Right ventricle myocardium inferior (tissue), 1 donor: ENCODE measurements at regions of chr20 and their contacts with region 1.

Region 1: GRCh38 chr20:40689943-40690835 is 1.2 kb upstream of the MAFB start:
- DNase-seq: peak; percentile 97
- ATAC-seq: peak; percentile 58

Region 2: DNA sequence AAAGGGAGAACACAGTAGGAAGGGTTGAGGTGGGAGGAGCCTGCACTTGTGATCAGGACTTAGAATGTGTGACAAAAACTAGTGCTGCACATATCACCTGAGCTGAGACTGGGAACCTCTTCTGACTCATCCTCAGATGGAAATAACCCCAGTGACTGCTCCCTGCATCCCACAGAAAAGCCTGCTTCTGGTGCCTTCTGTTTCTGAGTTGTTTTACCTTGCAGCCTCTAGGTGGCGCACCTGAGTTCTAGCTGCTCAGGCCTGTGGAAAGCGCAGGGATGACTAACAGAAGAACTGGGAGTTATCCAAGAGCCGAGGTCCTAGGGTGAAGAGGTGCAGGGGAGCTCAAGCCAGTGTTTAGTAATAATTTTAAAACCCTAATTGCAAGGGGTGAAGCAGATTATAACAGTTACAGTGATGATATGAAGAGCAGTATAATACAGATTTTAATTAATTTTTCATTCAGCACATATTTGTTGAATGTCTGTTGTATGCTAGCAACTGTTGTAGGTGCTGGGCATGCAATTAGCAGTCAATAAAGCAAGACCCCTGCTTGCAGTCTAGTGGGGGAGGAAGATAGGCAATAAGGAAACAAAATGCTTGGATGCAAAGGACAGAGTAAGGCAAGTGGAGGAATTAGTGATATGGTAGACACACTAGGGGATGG is 1425.5 kb before region 1 on chr20:
- intact Hi-C with region 1: loop called (anchors 5 kb)
- DNase-seq: no peak
- ATAC-seq: peak; percentile 67

Region 3: GRCh38 chr20:40160097-40160550 is 530.1 kb before region 1 on chr20:
- intact Hi-C with region 1: loop called (anchors 2 kb)
- DNase-seq: no peak
- ATAC-seq: peak; percentile 81

Region 4: GRCh38 chr20:40286975-40287531 is 403.1 kb before region 1 on chr20:
- intact Hi-C with region 1: loop called (anchors 1 kb)
- DNase-seq: peak; percentile 81
- ATAC-seq: peak; percentile 95